RWPE1 (cell line): ENCODE measurements at regions of chr10 and their contacts with region 1.

Region 1: DNA sequence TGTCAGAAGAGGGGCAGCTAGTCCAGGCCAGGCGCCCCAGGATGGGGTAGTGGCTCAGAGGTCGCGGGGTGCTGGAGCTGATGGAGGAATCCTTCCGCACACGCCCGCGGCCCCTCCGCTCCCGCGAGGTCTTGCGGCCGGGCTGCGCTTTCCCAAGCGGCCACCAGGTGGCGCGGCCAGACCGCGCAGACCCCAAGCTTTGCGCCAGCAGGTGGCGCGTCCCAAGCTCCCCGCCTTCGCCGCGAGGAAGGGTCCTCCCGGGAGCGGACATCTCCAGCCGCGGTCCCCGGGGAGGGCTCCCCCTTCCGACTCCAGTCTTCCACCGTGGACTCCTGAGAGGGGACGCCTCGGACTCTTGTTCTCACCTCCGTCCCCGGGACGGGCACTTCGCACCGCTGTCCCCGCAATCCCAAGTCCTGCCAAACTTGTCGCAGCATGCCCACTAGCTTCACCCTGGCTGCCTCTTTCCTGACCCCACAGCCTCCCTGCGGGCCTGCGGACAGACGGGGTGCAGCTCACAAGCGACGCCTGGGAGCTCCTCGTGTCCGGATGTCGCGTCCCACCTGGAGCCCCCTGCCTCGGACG is 19.4 kb downstream of the KCNK18 start:
- DNase-seq: peak; percentile 89
- H3K27ac ChIP-seq: no peak overlapping the region
- CTCF ChIP-seq: peak; percentile 98

Region 2: GRCh38 chr10:116098411-116099022 is 1118.2 kb before region 1 on chr10:
- CTCF ChIA-PET with region 1: no interaction called
- POLR2A ChIA-PET with region 1: no interaction called
- DNase-seq: no peak
- H3K27ac ChIP-seq: no peak overlapping the region
- CTCF ChIP-seq: no peak

Region 3: DNA sequence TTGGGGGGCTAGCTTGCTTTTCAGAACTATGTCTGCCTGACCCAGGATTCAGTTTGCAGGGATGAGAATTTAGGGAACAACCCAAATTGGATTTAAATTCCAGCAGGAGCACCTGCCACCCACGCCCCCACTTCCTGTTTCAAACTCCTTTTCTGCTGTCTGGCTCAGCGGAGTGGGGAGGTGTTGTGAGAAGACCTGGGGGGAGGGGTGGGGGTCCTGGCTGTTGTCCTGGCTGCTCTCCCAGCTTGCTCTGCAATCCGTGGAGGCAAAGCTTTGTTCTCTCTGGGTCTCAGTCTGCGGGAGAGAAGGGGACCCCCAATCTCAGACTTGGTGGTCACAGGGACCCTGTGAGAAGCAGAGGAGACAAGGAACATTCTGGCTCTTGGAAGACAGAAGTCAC is 18.6 kb before region 1 on chr10:
- CTCF ChIA-PET with region 1: interaction called, 16 read pairs
- POLR2A ChIA-PET with region 1: no interaction called
- DNase-seq: no peak
- H3K27ac ChIP-seq: no peak overlapping the region
- CTCF ChIP-seq: no peak

Region 4: GRCh38 chr10:117226824-117227451 is 10.2 kb after region 1 on chr10:
- CTCF ChIA-PET with region 1: interaction called, 17 read pairs
- POLR2A ChIA-PET with region 1: interaction called, 3 read pairs
- DNase-seq: peak; percentile 49
- H3K27ac ChIP-seq: no peak overlapping the region
- CTCF ChIP-seq: no peak

Region 5: DNA sequence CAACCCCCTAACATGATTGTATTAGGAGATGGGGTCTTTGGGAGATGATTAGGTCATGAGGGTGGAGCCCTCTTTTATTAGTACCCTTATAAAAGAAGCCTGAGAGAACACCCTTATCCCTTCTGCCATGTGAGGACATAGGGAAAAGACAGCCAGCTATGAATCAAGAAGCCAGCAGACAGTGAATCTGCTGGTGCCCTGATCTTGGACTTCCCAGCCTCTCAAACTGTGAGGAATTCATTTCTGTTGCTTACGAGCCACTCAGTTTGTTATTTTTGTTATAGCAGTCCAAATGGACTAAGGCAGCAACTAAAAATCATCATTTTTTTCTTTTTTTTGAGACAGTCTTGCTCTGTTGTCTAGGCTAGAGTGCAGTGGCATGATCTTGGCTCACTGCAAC is 84.0 kb after region 1 on chr10:
- CTCF ChIA-PET with region 1: interaction called, 11 read pairs
- POLR2A ChIA-PET with region 1: no interaction called
- DNase-seq: no peak
- H3K27ac ChIP-seq: no peak overlapping the region
- CTCF ChIP-seq: no peak

Region 6: DNA sequence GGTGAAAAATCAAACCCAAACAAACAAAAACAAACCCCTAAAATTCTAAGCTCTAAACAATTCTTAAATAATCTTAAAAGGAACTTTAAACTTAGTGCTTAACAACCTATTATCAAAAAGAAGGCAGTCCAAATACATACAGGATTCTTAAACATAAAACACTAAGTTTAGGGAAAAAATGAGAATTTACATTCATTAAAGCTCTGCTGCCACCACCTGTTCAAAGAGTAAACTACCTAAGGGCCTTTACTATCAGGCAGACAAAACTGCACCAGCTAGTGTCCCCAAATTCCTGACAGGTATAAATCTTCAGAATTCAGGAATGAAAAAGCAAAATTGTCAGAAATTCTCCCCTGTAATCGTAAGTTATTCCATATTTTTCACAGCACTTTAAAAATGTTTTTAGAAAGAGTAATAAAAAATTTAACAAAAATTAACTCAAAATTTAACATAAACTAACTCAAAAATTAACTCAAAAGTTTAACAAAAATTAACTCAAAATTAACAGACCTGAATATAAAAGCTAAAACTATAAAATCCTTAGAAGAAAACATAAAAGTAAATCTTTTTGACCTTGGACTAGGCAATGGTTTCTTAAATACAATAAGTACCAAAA is 103.5 kb after region 1 on chr10:
- CTCF ChIA-PET with region 1: interaction called, 93 read pairs
- POLR2A ChIA-PET with region 1: no interaction called
- DNase-seq: peak; percentile 43
- H3K27ac ChIP-seq: no peak overlapping the region
- CTCF ChIP-seq: peak; percentile 70

Region 7: DNA sequence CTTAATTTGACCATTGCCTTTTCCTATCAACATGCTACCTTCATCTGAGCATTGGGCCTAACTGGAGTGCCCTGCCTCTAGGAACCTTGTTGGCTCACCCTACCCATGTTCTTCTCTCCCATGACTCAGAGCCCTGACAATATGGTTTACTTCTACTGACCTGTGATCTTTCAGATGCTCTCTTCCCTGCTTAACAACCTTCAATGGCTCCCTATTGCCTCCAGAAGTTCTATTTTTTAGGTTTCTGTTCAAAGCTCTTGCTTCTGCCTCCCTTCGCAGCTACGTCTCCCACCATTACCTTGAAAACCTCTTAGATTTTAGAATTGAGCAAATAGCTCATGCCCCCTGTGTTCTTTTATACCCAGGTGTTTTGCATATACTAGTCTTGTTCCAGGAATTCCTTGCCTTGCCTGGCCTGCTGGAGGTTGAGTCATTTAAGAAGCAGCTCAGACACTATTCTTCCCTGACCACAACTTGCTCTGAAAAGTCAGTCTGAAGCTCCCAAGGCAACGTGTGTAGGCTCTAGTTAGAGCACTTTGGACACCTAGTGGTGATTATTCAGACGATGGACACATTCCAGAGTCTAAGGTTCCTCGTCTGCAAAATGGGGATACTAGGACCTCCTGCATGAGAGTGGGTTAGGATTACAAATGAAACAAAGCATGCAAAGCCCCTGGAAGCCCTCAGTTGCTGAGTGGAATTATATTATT is 261.4 kb after region 1 on chr10:
- CTCF ChIA-PET with region 1: interaction called, 15 read pairs
- POLR2A ChIA-PET with region 1: no interaction called
- DNase-seq: peak; percentile 88
- H3K27ac ChIP-seq: no peak overlapping the region
- CTCF ChIP-seq: no peak